K562 (cell line): ENCODE measurements at regions of chrX and their contacts with region 1.

Region 1: DNA sequence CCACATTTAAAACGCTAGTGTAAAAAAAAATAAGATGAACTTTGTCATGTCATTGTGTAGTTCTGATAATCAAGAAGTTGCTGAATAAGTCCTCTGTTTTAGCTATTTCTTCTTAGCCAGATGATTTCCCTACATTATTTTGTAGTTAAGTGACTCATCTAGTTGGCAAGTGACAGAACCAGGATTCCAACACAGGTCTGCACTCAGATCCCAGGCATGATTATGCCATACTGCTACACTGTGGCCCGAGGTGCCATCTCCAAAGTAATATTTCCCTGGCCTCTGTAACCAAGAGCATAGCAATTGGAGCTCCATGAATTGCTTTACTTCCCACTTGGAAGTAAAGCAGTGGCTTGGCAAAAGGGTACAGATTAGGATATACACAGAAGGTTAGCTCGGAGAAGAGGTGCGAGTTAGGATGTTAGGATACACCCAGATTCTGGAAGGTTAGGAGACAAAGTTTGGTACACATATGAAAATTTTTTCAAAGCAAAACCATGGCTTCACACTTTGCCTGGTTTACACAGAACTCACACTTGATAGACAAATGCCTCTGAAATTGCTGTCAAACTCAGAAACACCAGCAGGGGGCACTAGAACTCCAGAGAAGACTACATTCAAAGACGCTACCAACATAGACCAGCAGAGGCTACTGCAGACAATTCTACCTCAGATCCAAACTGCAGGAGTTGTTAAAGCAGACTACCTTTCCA is 41.4 kb downstream of the SRPX2 start:
- DNase-seq: peak; percentile 59 to 77 (median 68)
- ATAC-seq: peak; percentile 93
- H3K4me3 ChIP-seq: no peak overlapping the region
- H3K27ac ChIP-seq: no peak overlapping the region
- H3K4me1 ChIP-seq: no peaks in the 10 kb centered on the region
- H3K27me3 ChIP-seq: no peaks in the 10 kb centered on the region
- CTCF ChIP-seq: peak; percentile 84 to 99 (median 99)
- EP300 ChIP-seq: no peak
- POLR2A ChIP-seq: no peak
- RAD21 ChIP-seq: peak; percentile 83 to 96

Region 2: GRCh38 chrX:100350704-100351489 is 334.5 kb before region 1 on chrX:
- CTCF ChIA-PET with region 1: no interaction called
- POLR2A ChIA-PET with region 1: no interaction called
- in situ Hi-C with region 1: no loop called
- intact Hi-C with region 1: no loop called
- DNase-seq: no peak
- ATAC-seq: no peak
- H3K4me3 ChIP-seq: no peak overlapping the region
- H3K27ac ChIP-seq: no peak overlapping the region
- H3K4me1 ChIP-seq: no peaks in the 10 kb centered on the region
- H3K27me3 ChIP-seq: no peaks in the 10 kb centered on the region
- CTCF ChIP-seq: no peak
- EP300 ChIP-seq: no peak
- POLR2A ChIP-seq: no peak
- RAD21 ChIP-seq: no peak

Region 3: DNA sequence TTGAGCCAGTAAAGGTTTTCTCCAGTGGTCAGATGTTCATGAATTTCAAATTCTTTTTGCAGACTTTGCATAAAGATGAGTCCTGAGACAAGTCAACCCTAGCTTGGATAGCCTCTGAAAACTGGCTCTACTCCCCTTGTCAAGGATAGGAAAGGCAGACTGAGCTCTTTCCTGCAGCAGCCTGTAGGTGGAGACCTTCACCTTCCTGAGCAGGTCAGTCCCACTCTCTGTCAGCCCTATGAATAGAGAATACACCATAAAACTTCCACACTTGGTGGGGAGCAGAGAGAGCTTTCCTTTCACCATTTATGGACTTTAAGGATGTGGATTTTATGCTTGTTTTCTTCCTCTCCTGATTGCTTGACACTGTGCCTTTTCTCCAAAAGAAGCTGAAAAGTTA is 317.3 kb before region 1 on chrX:
- CTCF ChIA-PET with region 1: no interaction called
- POLR2A ChIA-PET with region 1: no interaction called
- in situ Hi-C with region 1: no loop called
- intact Hi-C with region 1: no loop called
- DNase-seq: peak in 2 of 4 experiments; percentile 5 to 7
- ATAC-seq: peak; percentile 75; the same call in 2 of the 3 replicates
- H3K4me3 ChIP-seq: no peak overlapping the region
- H3K27ac ChIP-seq: no peak overlapping the region
- H3K4me1 ChIP-seq: no peaks in the 10 kb centered on the region
- H3K27me3 ChIP-seq: no peaks in the 10 kb centered on the region
- CTCF ChIP-seq: peak in 2 of 3 experiments; percentile 30; a peak in 2 of 6 replicates
- EP300 ChIP-seq: no peak
- POLR2A ChIP-seq: no peak
- RAD21 ChIP-seq: peak in 1 of 2 experiments; percentile 15; a peak in 1 of 4 replicates

Region 4: DNA sequence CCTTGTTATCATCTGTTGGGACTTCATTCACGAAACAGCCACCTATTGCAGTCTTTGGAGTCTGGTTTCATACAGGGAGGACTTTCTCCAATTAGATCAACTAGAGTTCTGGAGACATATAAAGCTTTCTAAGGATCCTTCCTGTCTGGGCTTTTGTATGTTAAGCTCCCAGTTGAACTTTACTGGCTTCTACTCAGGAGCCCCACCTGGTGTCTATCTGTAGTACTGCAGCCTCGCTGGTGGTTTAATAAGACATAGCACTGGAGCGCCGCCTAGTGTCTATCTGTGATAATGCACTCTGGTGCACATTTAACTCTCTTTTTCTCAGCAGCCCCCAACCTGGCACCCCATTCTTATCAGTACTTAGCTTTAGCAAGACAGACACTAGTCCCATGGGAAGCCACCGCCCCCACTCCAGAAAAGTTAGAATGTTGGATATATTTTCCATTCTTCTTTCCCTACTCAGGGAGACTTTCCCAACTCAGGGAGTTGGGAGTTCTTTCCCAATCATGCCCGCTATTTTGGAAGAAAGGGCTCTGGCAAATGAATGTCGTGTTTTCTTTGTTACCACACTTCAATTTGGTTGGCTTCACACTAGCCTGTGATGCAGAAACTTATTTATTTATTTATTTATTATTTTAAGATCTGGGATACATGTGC is 83.4 kb after region 1 on chrX:
- CTCF ChIA-PET with region 1: interaction called, 54 read pairs
- POLR2A ChIA-PET with region 1: no interaction called
- in situ Hi-C with region 1: loop called (anchors 5 kb)
- intact Hi-C with region 1: loop called (anchors 1 kb)
- DNase-seq: peak; percentile 71 to 80 (median 77)
- ATAC-seq: peak; percentile 74
- H3K4me3 ChIP-seq: no peak overlapping the region
- H3K27ac ChIP-seq: no peak overlapping the region
- H3K4me1 ChIP-seq: no peaks in the 10 kb centered on the region
- H3K27me3 ChIP-seq: no peaks in the 10 kb centered on the region
- CTCF ChIP-seq: peak; percentile 96 to 100 (median 100)
- EP300 ChIP-seq: no peak
- POLR2A ChIP-seq: no peak
- RAD21 ChIP-seq: peak; percentile 94 to 98

Region 5: DNA sequence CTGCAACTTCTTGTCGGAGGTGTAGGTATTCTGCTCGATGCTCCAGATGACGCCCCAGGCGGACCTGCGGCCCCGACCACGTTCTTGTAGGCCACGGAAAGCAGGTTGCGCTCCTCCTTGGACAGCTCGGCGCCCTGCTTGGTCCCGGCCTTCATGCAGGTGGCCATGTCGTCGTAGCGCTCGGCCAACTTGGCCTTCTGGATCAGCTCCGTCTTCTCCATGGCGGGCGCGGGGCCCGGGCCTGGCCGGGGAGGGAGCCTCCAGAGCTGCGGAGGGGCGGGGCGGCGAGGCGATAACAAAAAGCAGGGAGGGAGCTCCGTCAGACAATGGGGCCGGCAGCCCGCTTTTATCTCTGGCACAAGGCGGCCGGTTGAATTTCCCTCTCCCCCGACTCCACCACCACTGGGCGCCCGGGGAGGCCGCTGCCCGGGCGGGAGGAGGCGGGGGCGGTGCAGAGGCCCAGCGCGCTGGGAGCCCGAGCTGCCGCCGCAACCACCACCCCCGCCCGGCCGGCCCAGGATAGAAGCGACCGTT is 505.8 kb after region 1 on chrX:
- CTCF ChIA-PET with region 1: no interaction called
- POLR2A ChIA-PET with region 1: no interaction called
- in situ Hi-C with region 1: loop called (anchors 25 kb)
- intact Hi-C with region 1: no loop called
- DNase-seq: peak; percentile 68 to 86 (median 78)
- ATAC-seq: peak; percentile 99
- H3K4me3 ChIP-seq: peak overlapping the region; percentile 27
- H3K27ac ChIP-seq: peak overlapping the region; percentile 68
- H3K4me1 ChIP-seq: peaks cover 0 to 6% of the 10 kb centered on the region in 2 experiments; a peak in 3 of 5 replicates
- H3K27me3 ChIP-seq: no peaks in the 10 kb centered on the region
- CTCF ChIP-seq: no peak
- EP300 ChIP-seq: no peak
- POLR2A ChIP-seq: 0 out of 2 replicates have a peak, but pooled peaks have one; percentile 32
- RAD21 ChIP-seq: no peak

Region 6: GRCh38 chrX:101206471-101206870 is 521.0 kb after region 1 on chrX:
- CTCF ChIA-PET with region 1: interaction called, 6 read pairs
- POLR2A ChIA-PET with region 1: no interaction called
- in situ Hi-C with region 1: no loop called
- intact Hi-C with region 1: loop called (anchors 1 kb)
- DNase-seq: peak; percentile 19 to 51 (median 32)
- ATAC-seq: peak; percentile 94
- H3K4me3 ChIP-seq: no peak overlapping the region
- H3K27ac ChIP-seq: no peak overlapping the region
- H3K4me1 ChIP-seq: no peaks in the 10 kb centered on the region
- H3K27me3 ChIP-seq: no peaks in the 10 kb centered on the region
- CTCF ChIP-seq: peak; percentile 48 to 79 (median 64); a peak in 5 of 6 replicates
- EP300 ChIP-seq: no peak
- POLR2A ChIP-seq: no peak
- RAD21 ChIP-seq: peak; percentile 56 to 83

Region 7: GRCh38 chrX:101287402-101287801 is 602.0 kb after region 1 on chrX:
- CTCF ChIA-PET with region 1: interaction called, 4 read pairs
- POLR2A ChIA-PET with region 1: no interaction called
- in situ Hi-C with region 1: no loop called
- intact Hi-C with region 1: loop called (anchors 10 kb)
- DNase-seq: peak; percentile 13 to 49 (median 20)
- ATAC-seq: peak; percentile 81
- H3K4me3 ChIP-seq: no peak overlapping the region
- H3K27ac ChIP-seq: no peak overlapping the region
- H3K4me1 ChIP-seq: no peaks in the 10 kb centered on the region
- H3K27me3 ChIP-seq: no peaks in the 10 kb centered on the region; a peak in 1 of 5 replicates
- CTCF ChIP-seq: peak; percentile 39 to 60 (median 51); a peak in 4 of 6 replicates
- EP300 ChIP-seq: no peak
- POLR2A ChIP-seq: no peak
- RAD21 ChIP-seq: peak; percentile 20 to 69; a peak in 3 of 4 replicates